ENCODE measurements at regions of chr16 and their contacts with region 1.

Region 1: GRCh38 chr16:85027349-85027957 is at the start of gene KIAA0513:
- DNase-seq: peak; percentile 93
- H3K4me3 Mint-ChIP-seq: peak within 1 kb of the TSS; percentile 84
- H3K27ac Mint-ChIP-seq: peak within 1 kb of the TSS; percentile 78
- H3K4me1 Mint-ChIP-seq: peaks cover 18% of the 10 kb centered on the region
- H3K27me3 Mint-ChIP-seq: no peaks in the 10 kb centered on the region
- CTCF ChIP-seq: no peak
- total RNA-seq, gene KIAA0513: 4.2 and 4.9 TPM in 2 replicates

Region 2: GRCh38 chr16:84754353-84754856 is 273.0 kb before region 1 on chr16:
- CTCF ChIA-PET with region 1: no interaction called
- POLR2A ChIA-PET with region 1: no interaction called
- intact Hi-C with region 1: no loop called
- DNase-seq: peak; percentile 81
- H3K4me3 Mint-ChIP-seq: no peak overlapping the region
- H3K27ac Mint-ChIP-seq: peak overlapping the region; percentile 57
- H3K4me1 Mint-ChIP-seq: peaks cover 18% of the 10 kb centered on the region
- H3K27me3 Mint-ChIP-seq: no peaks in the 10 kb centered on the region
- CTCF ChIP-seq: peak; percentile 67

Region 3: GRCh38 chr16:84995663-84996062 is 31.8 kb before region 1 on chr16:
- CTCF ChIA-PET with region 1: interaction called, 3 read pairs
- POLR2A ChIA-PET with region 1: interaction called, 163 read pairs
- intact Hi-C with region 1: loop called (anchors 1 kb)
- DNase-seq: peak; percentile 70
- H3K4me3 Mint-ChIP-seq: peak overlapping the region; percentile 59
- H3K27ac Mint-ChIP-seq: peak overlapping the region; percentile 96
- H3K4me1 Mint-ChIP-seq: peaks cover 48% of the 10 kb centered on the region
- H3K27me3 Mint-ChIP-seq: no peaks in the 10 kb centered on the region
- CTCF ChIP-seq: no peak

Region 4: GRCh38 chr16:85004559-85005205 is 22.8 kb before region 1 on chr16:
- CTCF ChIA-PET with region 1: interaction called, 9 read pairs
- POLR2A ChIA-PET with region 1: interaction called, 163 read pairs
- intact Hi-C with region 1: no loop called
- DNase-seq: peak; percentile 56
- H3K4me3 Mint-ChIP-seq: peak overlapping the region; percentile 50
- H3K27ac Mint-ChIP-seq: peak overlapping the region; percentile 93
- H3K4me1 Mint-ChIP-seq: peaks cover 61% of the 10 kb centered on the region
- H3K27me3 Mint-ChIP-seq: no peaks in the 10 kb centered on the region
- CTCF ChIP-seq: no peak

Region 5: GRCh38 chr16:85010931-85011845 is 16.3 kb before region 1 on chr16 and contains the start of gene ZDHHC7:
- CTCF ChIA-PET with region 1: interaction called, 9 read pairs
- POLR2A ChIA-PET with region 1: interaction called, 124 read pairs
- intact Hi-C with region 1: no loop called
- DNase-seq: peak; percentile 75
- H3K4me3 Mint-ChIP-seq: peak within 1 kb of the TSS; percentile 84
- H3K27ac Mint-ChIP-seq: peak within 1 kb of the TSS; percentile 99
- H3K4me1 Mint-ChIP-seq: peaks cover 15% of the 10 kb centered on the region
- H3K27me3 Mint-ChIP-seq: no peaks in the 10 kb centered on the region
- CTCF ChIP-seq: no peak
- total RNA-seq, gene ZDHHC7: 46.3 and 54.5 TPM in 2 replicates

Region 6: GRCh38 chr16:85017151-85017550 is 10.3 kb before region 1 on chr16:
- CTCF ChIA-PET with region 1: interaction called, 4 read pairs
- POLR2A ChIA-PET with region 1: interaction called, 124 read pairs
- intact Hi-C with region 1: no loop called
- DNase-seq: no peak
- H3K4me3 Mint-ChIP-seq: no peak overlapping the region
- H3K27ac Mint-ChIP-seq: no peak overlapping the region
- H3K4me1 Mint-ChIP-seq: peaks cover 15% of the 10 kb centered on the region
- H3K27me3 Mint-ChIP-seq: no peaks in the 10 kb centered on the region
- CTCF ChIP-seq: no peak

Region 7: DNA sequence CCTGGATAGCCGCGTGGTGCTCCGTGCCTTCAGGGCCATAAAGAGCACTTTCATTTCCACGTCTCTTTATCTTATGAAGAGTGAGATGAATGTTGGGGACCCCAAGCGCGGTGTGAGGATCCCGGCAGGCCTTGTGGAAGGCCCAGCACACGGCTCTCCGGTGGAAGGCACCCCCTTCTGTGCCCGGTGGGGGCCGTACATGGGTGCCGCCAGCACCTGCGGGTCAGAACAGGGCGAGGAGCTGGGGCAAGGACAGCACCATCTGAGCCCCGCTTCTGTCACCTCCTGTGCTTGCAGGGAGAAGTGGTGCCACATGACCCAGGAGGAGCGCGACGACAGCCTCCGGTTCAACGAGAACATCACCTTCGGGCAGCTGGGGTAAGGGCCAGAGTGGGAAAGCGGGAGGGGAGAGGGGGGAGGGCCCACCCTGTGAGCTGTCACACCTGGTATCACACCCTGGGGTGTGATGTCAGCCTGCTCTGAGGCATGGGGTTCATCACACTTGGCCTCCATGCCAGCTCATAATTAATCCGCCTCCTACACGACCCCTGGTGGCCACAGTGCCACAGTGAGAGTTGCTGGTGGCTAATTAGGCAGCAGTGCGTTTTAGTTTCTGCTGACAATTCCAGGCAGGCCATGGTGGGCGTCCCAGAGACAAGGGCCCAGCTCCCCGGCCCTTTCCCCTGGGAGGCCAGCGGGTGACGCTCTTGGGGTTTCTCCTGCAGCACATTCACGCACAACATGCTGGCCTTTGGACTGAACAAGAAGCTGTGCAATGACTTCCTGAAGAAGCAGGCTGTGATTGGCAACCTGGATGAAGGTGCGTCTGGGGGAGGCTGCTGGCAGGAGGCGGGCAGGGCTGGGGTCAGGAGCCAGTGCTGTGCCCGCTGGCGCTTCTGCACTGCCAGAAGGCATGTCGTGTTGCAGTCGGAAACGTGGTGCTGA is 59.2 kb after region 1 on chr16:
- CTCF ChIA-PET with region 1: interaction called, 5 read pairs
- POLR2A ChIA-PET with region 1: interaction called, 5 read pairs
- intact Hi-C with region 1: loop called (anchors 2 kb)
- DNase-seq: peak; percentile 75
- H3K4me3 Mint-ChIP-seq: no peak overlapping the region
- H3K27ac Mint-ChIP-seq: no peak overlapping the region
- H3K4me1 Mint-ChIP-seq: no peaks in the 10 kb centered on the region
- H3K27me3 Mint-ChIP-seq: no peaks in the 10 kb centered on the region
- CTCF ChIP-seq: peak; percentile 67

Region 8: GRCh38 chr16:86424398-86425367 is 1397.2 kb after region 1 on chr16:
- CTCF ChIA-PET with region 1: no interaction called
- POLR2A ChIA-PET with region 1: no interaction called
- intact Hi-C with region 1: no loop called
- DNase-seq: no peak
- H3K4me3 Mint-ChIP-seq: no peak overlapping the region
- H3K27ac Mint-ChIP-seq: no peak overlapping the region
- H3K4me1 Mint-ChIP-seq: no peaks in the 10 kb centered on the region
- H3K27me3 Mint-ChIP-seq: peaks cover 1% of the 10 kb centered on the region
- CTCF ChIP-seq: no peak